PC-3 (cell line): ENCODE measurements at regions of chr20 and their contacts with region 1.

Region 1: DNA sequence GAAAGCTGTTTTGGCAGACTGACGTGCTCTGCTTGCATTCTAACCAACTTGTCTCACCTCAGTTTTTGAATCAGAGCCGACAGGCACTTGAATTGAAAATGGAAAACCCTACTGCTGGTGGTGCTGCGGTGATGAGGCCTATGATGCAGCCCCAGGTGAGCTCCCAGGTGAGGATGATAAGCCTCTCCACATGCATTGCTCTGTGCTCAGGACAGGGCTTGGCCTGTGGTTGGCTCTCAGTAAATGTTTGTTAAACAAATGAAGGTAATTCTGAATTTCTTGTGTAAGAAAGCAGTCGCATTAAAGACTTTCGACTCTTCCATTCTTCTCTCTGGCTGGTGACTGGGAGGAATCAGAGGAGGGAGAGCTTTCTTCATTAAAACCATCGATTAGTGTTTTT is 136.3 kb downstream of the SULF2 start:
- DNase-seq: no peak
- ATAC-seq: no peak
- H3K4me3 ChIP-seq: no peak overlapping the region
- H3K27ac ChIP-seq: no peak overlapping the region
- H3K4me1 ChIP-seq: no peaks in the 10 kb centered on the region
- H3K27me3 ChIP-seq: no peaks in the 10 kb centered on the region
- CTCF ChIP-seq: no peak

Region 2: GRCh38 chr20:47767972-47768794 is 119.2 kb after region 1 on chr20:
- CTCF ChIA-PET with region 1: no interaction called
- POLR2A ChIA-PET with region 1: no interaction called
- intact Hi-C with region 1: no loop called
- DNase-seq: no peak
- ATAC-seq: no peak
- H3K4me3 ChIP-seq: no peak overlapping the region
- H3K27ac ChIP-seq: no peak overlapping the region
- H3K4me1 ChIP-seq: no peaks in the 10 kb centered on the region
- H3K27me3 ChIP-seq: no peaks in the 10 kb centered on the region
- CTCF ChIP-seq: no peak

Region 3: DNA sequence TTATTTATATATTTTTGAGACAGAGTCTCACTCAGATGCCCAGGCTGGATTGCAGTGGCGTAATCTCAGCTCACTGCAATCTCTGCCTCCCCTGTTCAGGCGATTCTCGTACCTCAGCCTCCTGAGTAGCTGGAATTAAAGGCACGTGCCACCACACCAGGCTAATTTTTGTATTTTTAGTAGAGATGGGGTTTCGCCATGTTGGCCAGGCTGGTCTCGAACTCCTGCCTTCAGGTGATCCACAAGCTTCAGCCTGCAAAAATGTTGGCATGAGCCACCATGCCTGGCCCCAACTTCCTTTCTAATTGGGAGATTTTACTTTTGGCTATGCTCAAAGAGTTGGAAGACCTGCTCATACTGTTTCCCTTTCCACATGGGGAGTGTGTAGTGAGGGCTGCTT is 592.0 kb after region 1 on chr20:
- CTCF ChIA-PET with region 1: no interaction called
- POLR2A ChIA-PET with region 1: interaction called, 19 read pairs
- intact Hi-C with region 1: no loop called
- DNase-seq: no peak
- ATAC-seq: no peak
- H3K4me3 ChIP-seq: no peak overlapping the region
- H3K27ac ChIP-seq: no peak overlapping the region
- H3K4me1 ChIP-seq: peaks cover 5% of the 10 kb centered on the region; the same call in 1 of the 2 replicates
- H3K27me3 ChIP-seq: peaks cover 29% of the 10 kb centered on the region
- CTCF ChIP-seq: no peak